ENCODE measurements at regions of chr1 and their contacts with region 1.

Region 1: GRCh38 chr1:228165372-228166169 is at the start of gene IBA57:
- DNase-seq: peak; percentile 100
- ATAC-seq: peak; percentile 86
- H3K4me3 ChIP-seq: peak within 1 kb of the TSS; percentile 77
- H3K27ac ChIP-seq: peak within 1 kb of the TSS; percentile 93
- H3K4me1 ChIP-seq: peaks cover 18% of the 10 kb centered on the region
- H3K27me3 ChIP-seq: no peaks in the 10 kb centered on the region
- CTCF ChIP-seq: peak; percentile 95
- total RNA-seq, gene IBA57: 13.3 and 18.3 TPM in 2 replicates

Region 2: GRCh38 chr1:226186124-226187018 is 1979.2 kb before region 1 on chr1 and contains the start of gene ACBD3:
- CTCF ChIA-PET with region 1: no interaction called
- POLR2A ChIA-PET with region 1: no interaction called
- intact Hi-C with region 1: loop called (anchors 5 kb)
- DNase-seq: peak; percentile 95
- ATAC-seq: peak; percentile 94
- H3K4me3 ChIP-seq: peak within 1 kb of the TSS; percentile 80
- H3K27ac ChIP-seq: peak within 1 kb of the TSS; percentile 42
- H3K4me1 ChIP-seq: peaks cover 27% of the 10 kb centered on the region
- H3K27me3 ChIP-seq: no peaks in the 10 kb centered on the region
- CTCF ChIP-seq: 0 out of 2 replicates have a peak, but pooled peaks have one; percentile 12
- total RNA-seq, gene ACBD3: 62.2 and 62.9 TPM in 2 replicates

Region 3: GRCh38 chr1:227999056-227999930 is 166.3 kb before region 1 on chr1:
- CTCF ChIA-PET with region 1: interaction called, 19 read pairs
- POLR2A ChIA-PET with region 1: no interaction called
- intact Hi-C with region 1: loop called (anchors 1 kb)
- DNase-seq: peak; percentile 97
- ATAC-seq: peak; percentile 96
- H3K4me3 ChIP-seq: no peak overlapping the region
- H3K27ac ChIP-seq: no peak overlapping the region
- H3K4me1 ChIP-seq: no peaks in the 10 kb centered on the region
- H3K27me3 ChIP-seq: no peaks in the 10 kb centered on the region
- CTCF ChIP-seq: peak; percentile 100

Region 4: DNA sequence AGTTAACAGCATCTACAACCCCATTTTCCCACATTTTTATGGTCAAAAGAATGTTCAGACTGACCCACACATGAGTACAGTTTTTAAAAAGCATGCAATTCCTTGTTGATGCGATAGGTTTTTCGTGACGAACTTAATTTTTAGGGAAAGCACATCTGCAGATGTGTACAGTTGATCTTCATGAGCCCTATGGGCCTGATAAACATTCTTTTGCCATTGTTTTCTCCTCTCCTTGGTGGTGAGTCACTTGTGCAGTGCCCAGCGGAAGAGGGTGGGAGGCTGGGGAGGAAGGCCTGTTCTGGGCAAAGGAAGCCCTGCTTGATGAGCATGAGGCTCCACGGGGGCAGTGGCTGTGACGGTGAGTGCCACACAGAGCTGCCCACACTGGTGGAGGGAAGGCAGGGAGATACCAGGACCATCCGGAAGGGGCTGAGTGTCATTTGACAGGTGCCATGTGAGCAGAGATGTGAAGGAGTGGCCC is 77.8 kb before region 1 on chr1:
- CTCF ChIA-PET with region 1: interaction called, 5 read pairs
- POLR2A ChIA-PET with region 1: interaction called, 5 read pairs
- intact Hi-C with region 1: loop called (anchors 1 kb)
- DNase-seq: peak; percentile 96
- ATAC-seq: peak; percentile 82
- H3K4me3 ChIP-seq: peak overlapping the region; percentile 16; the same call in 1 of the 2 replicates
- H3K27ac ChIP-seq: peak overlapping the region; percentile 14
- H3K4me1 ChIP-seq: peaks cover 74% of the 10 kb centered on the region
- H3K27me3 ChIP-seq: no peaks in the 10 kb centered on the region
- CTCF ChIP-seq: peak; percentile 39

Region 5: DNA sequence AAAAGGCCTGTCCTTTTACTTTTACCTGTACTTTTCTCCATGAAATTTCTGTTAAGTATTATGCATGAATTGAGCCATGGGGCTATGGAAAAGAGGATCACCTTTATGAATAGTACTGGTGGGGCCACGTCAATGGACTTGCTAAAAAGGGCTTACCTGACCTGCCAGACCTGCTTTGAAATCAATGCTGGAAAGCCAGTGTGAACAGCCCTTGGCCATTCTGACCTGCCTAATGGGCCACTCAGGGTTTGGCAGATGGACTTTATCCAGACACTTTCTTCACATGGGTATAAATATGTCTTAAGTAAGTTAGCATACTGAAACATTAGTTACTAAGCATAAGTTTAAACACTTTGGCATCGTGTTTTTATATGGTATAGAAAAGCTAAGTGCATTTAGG is 33.8 kb before region 1 on chr1:
- CTCF ChIA-PET with region 1: interaction called, 16 read pairs
- POLR2A ChIA-PET with region 1: no interaction called
- intact Hi-C with region 1: loop called (anchors 1 kb)
- DNase-seq: peak; percentile 58
- ATAC-seq: no peak
- H3K4me3 ChIP-seq: peak overlapping the region; percentile 65
- H3K27ac ChIP-seq: peak overlapping the region; percentile 54
- H3K4me1 ChIP-seq: peaks cover 12% of the 10 kb centered on the region
- H3K27me3 ChIP-seq: no peaks in the 10 kb centered on the region
- CTCF ChIP-seq: no peak

Region 6: DNA sequence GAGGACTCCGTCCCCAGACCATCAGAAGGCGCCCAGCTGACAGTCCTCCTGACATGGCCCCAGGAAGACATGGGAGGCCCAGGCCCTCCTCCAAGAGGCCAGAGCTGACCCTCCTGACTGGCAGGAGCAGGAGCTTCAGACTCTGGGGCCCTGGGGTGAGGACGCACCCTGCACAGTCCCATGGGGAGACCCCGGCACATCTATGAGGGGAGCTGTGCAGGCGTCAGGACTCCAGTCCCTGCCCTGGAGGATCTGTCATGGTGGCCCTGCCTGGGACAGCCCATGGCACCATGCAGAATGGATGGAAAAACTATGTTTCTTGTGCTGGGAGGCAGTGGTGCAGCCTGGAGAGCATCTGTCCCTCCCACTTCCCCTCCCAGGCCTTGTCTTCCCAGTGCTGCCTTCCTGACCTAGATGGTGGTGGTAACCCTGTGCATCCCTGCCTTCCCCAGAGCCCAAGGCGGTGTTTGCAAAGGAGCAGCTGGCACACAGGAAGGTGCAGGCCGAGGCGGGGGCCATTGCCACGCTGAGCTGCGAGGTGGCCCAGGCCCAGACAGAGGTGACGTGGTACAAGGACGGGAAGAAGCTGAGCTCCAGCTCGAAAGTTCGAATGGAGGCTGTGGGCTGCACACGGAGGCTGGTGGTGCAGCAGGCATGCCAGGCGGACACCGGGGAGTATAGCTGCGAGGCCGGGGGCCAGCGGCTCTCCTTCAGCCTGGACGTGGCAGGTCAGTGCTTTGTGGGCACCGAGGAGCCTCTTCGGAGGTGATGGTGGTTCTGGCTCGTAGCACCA is 84.1 kb after region 1 on chr1:
- CTCF ChIA-PET with region 1: no interaction called
- POLR2A ChIA-PET with region 1: interaction called, 35 read pairs
- intact Hi-C with region 1: no loop called
- DNase-seq: no peak
- ATAC-seq: no peak
- H3K4me3 ChIP-seq: no peak overlapping the region
- H3K27ac ChIP-seq: no peak overlapping the region
- H3K4me1 ChIP-seq: no peaks in the 10 kb centered on the region
- H3K27me3 ChIP-seq: no peaks in the 10 kb centered on the region
- CTCF ChIP-seq: no peak

Region 7: DNA sequence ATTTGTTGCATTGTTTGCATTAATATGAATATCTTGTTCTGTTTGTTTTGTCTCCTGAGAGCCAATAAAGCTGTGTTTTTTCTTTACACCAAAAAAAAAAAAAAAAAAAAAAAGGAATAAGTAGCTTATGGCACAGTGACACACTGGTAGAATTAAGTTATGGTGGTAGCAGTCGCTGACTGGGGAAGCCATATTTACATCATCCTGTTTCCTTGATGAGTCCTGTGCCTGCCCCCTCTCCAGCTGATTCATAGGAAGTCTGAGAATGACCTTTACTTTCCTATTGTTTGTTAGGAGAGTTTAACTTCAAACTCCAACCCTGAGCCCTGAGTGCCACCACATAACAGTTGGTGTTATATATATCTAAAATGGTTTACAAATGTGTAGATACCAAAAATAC is 104.5 kb after region 1 on chr1:
- CTCF ChIA-PET with region 1: no interaction called
- POLR2A ChIA-PET with region 1: no interaction called
- intact Hi-C with region 1: no loop called
- DNase-seq: peak; percentile 44
- ATAC-seq: peak; percentile 50
- H3K4me3 ChIP-seq: no peak overlapping the region
- H3K27ac ChIP-seq: no peak overlapping the region
- H3K4me1 ChIP-seq: no peaks in the 10 kb centered on the region
- H3K27me3 ChIP-seq: no peaks in the 10 kb centered on the region
- CTCF ChIP-seq: no peak

Measured in PC-3 (cell line).